Activated CD4-positive, alpha-beta T cell treated with anti-CD3 and anti-CD28 coated beads for 36 hours (primary cell): ENCODE measurements at regions of chr16 and their contacts with region 1.

Region 1: DNA sequence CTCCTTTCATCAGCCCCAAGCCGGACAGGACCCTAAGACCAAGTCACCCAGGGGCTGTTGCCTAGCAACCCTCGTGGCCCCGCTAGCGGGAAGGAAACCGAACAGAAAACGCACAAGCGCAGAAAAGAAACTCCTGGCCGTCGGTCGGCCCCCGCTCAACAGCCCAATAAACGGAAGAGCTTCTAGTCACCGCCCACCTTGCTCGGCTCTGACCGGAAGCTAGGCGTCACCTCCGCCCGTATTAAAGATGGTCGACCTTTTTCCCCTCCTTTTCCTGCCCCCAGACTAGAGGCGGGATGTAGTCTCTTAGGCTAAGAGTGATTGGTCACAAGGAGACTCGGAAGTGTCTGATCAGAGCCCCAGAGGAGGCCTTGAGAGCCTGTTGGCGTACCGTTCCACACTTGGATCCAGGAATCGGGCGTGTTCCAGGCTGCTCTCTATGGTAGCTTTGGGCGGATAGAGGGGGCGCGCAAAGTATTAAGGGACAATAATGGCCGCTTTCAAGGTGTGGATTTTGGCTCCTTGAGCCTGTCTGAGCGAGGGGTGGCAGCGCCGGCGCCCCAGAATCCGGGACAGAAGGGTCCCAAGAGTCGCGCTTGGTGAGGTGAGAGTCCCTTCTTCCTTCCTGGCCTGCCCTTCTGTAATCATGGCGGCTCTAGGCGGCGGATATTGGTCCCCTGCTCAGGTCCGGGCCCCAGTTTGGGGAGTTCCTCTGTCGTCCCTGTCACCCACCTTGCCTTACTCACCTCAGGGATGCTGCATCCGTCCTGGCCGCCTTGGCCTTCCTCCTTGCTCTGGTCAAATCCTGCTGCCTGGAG is at the starts of genes DHX38 and TXNL4B:
- DNase-seq: peak; percentile 95
- ATAC-seq: peak; percentile 98
- H3K4me3 Mint-ChIP-seq: peak within 1 kb of the TSS; percentile 96
- H3K27ac Mint-ChIP-seq: peak within 1 kb of the TSS; percentile 92
- H3K4me1 Mint-ChIP-seq: peaks cover 41% of the 10 kb centered on the region
- H3K27me3 Mint-ChIP-seq: no peaks in the 10 kb centered on the region
- total RNA-seq, gene DHX38: 55.9 to 79.0 TPM
- total RNA-seq, gene TXNL4B: 17.6 to 24.6 TPM

Region 2: GRCh38 chr16:70737377-70738082 is 1356.1 kb before region 1 on chr16:
- CTCF ChIA-PET with region 1: no interaction called
- POLR2A ChIA-PET with region 1: no interaction called
- intact Hi-C with region 1: loop called in 1 of 2 experiments (anchors 5 kb)
- DNase-seq: peak; percentile 91
- ATAC-seq: peak; percentile 88
- H3K4me3 Mint-ChIP-seq: peak overlapping the region; percentile 55
- H3K27ac Mint-ChIP-seq: peak overlapping the region; percentile 97
- H3K4me1 Mint-ChIP-seq: peaks cover 60% of the 10 kb centered on the region
- H3K27me3 Mint-ChIP-seq: no peaks in the 10 kb centered on the region

Region 3: DNA sequence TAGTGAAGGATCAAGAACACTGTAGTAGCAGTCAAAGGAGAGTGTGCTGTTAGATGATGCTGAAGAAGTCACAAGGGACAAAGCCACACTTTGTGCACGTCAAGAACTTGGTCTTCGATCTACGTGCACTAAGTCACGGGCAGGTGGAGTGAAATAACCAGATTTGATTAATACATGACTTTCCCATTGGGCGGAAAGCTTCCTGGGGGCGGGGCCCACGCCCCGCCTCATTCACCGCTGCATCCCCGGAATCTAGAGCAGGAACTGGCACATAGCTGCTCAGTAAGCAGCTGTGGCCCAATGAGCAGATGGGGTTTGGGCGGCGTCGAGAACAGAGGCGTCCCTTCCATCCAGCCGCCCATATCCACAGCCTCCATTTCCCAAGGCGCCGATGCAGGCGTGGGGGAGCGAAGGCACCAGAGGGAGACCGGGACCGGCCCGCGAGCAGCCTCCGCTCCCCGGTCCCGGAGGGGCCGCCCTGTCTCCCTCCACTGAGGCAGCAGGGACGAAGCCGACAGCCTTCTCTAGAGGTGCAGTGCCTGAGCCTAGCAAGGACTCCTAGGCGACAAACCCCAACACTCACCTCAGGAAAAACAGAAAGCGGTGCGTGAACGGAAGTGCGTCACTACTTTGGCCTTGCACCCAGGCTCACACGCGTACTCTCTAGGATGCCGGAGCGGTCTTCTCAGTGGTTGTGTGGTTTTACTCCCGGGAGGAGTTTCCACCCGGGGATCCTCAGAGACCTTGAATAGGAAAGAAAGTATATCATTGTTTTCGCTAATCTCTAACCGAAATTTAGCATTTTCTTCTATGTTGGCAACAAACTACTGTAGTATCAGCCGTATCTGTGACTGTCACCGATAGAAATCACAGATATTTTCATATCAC is 609.4 kb before region 1 on chr16:
- CTCF ChIA-PET with region 1: no interaction called
- POLR2A ChIA-PET with region 1: no interaction called
- intact Hi-C with region 1: loop called in 1 of 2 experiments (anchors 1 kb)
- DNase-seq: peak; percentile 91
- ATAC-seq: peak; percentile 90
- H3K4me3 Mint-ChIP-seq: peak overlapping the region; percentile 75
- H3K27ac Mint-ChIP-seq: peak overlapping the region; percentile 90
- H3K4me1 Mint-ChIP-seq: peaks cover 14% of the 10 kb centered on the region
- H3K27me3 Mint-ChIP-seq: peaks cover 3% of the 10 kb centered on the region

Region 4: GRCh38 chr16:71808593-71809459 is 284.8 kb before region 1 on chr16 and contains the start of gene AP1G1:
- CTCF ChIA-PET with region 1: no interaction called
- POLR2A ChIA-PET with region 1: no interaction called
- intact Hi-C with region 1: loop called (anchors 1 kb)
- DNase-seq: peak; percentile 96
- ATAC-seq: peak; percentile 92
- H3K4me3 Mint-ChIP-seq: peak within 1 kb of the TSS; percentile 91
- H3K27ac Mint-ChIP-seq: peak within 1 kb of the TSS; percentile 100
- H3K4me1 Mint-ChIP-seq: peaks cover 48% of the 10 kb centered on the region
- H3K27me3 Mint-ChIP-seq: no peaks in the 10 kb centered on the region
- total RNA-seq, gene AP1G1: 65.5 to 68.8 TPM

Region 5: DNA sequence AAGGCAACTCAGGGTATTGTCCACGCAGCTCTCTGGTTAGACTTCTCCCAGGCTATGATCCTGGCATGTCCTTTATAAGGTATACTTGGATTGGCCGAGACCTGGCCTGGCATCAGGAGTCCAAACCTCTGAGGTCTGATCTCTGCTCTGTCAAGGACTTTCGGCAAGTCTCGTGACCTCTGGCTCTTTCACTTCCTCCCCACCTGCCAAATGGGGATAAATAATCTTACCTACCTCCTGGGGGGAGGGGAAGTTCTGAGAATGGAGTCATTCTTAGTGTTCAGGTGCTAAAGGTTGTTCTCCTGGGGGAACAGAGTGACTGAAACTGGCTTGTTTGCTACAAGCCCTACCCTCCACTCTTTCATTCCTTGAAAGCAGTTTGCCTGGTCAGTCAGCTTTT is 240.2 kb before region 1 on chr16:
- CTCF ChIA-PET with region 1: no interaction called
- POLR2A ChIA-PET with region 1: no interaction called
- intact Hi-C with region 1: no loop called
- DNase-seq: no peak
- ATAC-seq: no peak
- H3K4me3 Mint-ChIP-seq: no peak overlapping the region
- H3K27ac Mint-ChIP-seq: peak overlapping the region; percentile 81
- H3K4me1 Mint-ChIP-seq: peaks cover 52% of the 10 kb centered on the region
- H3K27me3 Mint-ChIP-seq: no peaks in the 10 kb centered on the region

Region 6: DNA sequence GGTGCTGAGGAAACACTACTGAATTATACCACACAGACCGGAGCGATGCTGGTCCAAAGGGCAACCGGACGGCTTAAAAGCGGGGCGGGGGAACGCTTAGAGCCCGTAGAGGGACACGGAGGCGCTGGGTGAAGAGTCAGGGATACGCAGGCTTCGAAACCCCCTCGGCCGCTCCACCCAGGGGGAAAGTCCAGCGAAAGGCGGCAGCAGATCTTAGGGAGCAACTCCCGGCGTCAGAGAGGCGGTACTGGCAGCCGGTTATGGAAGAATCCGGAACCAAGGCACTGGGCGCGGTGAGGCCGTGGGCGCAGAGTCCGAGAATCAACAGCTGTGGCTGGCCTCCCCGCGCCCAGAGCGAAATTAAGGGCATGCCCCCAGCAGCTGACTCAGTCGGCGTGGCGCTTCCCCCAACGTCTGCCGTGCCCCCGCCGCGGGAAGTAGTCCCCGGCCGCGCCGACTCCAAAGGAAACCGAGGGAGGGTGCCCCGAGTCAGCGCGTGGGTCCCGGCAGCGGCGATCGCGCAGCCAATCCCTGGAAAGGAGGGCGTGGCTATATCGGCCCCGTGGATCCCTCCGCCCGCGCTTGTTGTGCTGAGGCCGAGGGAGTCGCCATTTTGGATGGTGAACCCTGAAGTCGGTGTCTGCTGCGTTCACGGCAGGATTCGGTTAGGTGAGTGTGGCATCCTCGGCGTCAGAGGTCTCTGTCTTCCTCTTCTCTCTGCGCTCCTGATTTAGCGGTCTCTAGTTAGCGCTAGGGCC is 198.6 kb before region 1 on chr16 and contains the start of gene IST1:
- CTCF ChIA-PET with region 1: no interaction called
- POLR2A ChIA-PET with region 1: no interaction called
- intact Hi-C with region 1: loop called (anchors 1 to 10 kb)
- DNase-seq: peak; percentile 99
- ATAC-seq: peak; percentile 92
- H3K4me3 Mint-ChIP-seq: peak within 1 kb of the TSS; percentile 96
- H3K27ac Mint-ChIP-seq: peak within 1 kb of the TSS; percentile 94
- H3K4me1 Mint-ChIP-seq: peaks cover 31% of the 10 kb centered on the region
- H3K27me3 Mint-ChIP-seq: no peaks in the 10 kb centered on the region
- total RNA-seq, gene IST1: 170 to 179 TPM

Region 7: GRCh38 chr16:71933913-71934695 is 159.6 kb before region 1 on chr16:
- CTCF ChIA-PET with region 1: no interaction called
- POLR2A ChIA-PET with region 1: no interaction called
- intact Hi-C with region 1: no loop called
- DNase-seq: no peak
- ATAC-seq: peak; percentile 9
- H3K4me3 Mint-ChIP-seq: no peak overlapping the region
- H3K27ac Mint-ChIP-seq: peak overlapping the region; percentile 25
- H3K4me1 Mint-ChIP-seq: peaks cover 10% of the 10 kb centered on the region
- H3K27me3 Mint-ChIP-seq: no peaks in the 10 kb centered on the region

Region 8: GRCh38 chr16:72664509-72665225 is 571.0 kb after region 1 on chr16:
- CTCF ChIA-PET with region 1: no interaction called
- POLR2A ChIA-PET with region 1: no interaction called
- intact Hi-C with region 1: loop called in 1 of 2 experiments (anchors 1 kb)
- DNase-seq: peak; percentile 97
- ATAC-seq: peak; percentile 100
- H3K4me3 Mint-ChIP-seq: peak overlapping the region; percentile 99
- H3K27ac Mint-ChIP-seq: peak overlapping the region; percentile 96
- H3K4me1 Mint-ChIP-seq: peaks cover 13% of the 10 kb centered on the region
- H3K27me3 Mint-ChIP-seq: peaks cover 4% of the 10 kb centered on the region